CD4-positive, alpha-beta T cell (primary cell): ENCODE measurements at regions of chr16 and their contacts with region 1.

Region 1: DNA sequence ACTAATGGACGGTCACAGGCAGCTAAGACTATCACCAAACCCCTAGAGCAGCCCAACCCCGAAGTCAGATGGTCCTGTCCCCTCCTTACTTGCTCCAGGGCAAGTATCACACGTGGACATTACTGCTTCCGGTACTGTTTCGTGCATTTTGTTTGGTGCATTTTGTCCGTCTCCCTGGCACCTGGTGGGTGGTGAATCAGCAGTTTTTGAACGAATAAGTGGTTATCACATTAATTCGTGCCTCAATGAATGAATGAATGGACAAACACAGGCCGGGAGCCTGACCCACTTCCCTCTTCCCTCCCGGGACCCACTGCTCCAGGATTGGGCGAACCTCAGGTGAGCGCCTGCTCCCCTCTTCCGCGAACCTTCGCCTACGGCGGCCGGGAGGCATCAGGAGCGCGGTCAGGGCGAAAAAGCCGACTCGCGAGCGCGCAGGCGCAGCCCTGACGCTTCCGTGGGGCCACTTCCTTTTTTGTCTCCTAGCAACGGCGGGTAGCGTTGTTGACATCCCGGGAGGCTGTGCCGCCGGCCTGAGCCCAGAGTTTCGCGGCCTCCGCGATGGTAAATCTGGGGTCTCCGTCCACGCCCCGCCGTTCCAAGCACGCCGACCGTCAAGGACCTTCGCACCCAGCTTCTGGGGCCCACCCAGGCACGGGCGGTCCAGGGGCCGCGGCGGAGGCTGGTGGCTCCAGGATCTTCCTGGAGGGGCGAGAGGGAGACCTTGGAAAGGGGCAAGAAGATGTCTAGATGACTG is at the start of gene DYNLRB2:
- DNase-seq: peak; percentile 85 to 97 (median 89)
- ATAC-seq: peak; percentile 91
- H3K4me3 ChIP-seq: peak within 1 kb of the TSS; percentile 62
- H3K4me3 Mint-ChIP-seq: peak within 1 kb of the TSS; percentile 93
- H3K27ac ChIP-seq: peak within 1 kb of the TSS; percentile 36 to 62
- H3K27ac Mint-ChIP-seq: peak within 1 kb of the TSS; percentile 94
- H3K4me1 ChIP-seq: peaks cover 11% of the 10 kb centered on the region
- H3K4me1 Mint-ChIP-seq: peaks cover 17% of the 10 kb centered on the region
- H3K27me3 ChIP-seq: no peaks in the 10 kb centered on the region
- H3K27me3 Mint-ChIP-seq: peaks cover 4% of the 10 kb centered on the region
- CTCF ChIP-seq: no peak
- total RNA-seq, gene DYNLRB2: 0.31 TPM in 1 of 2 experiments, not detected in the other

Region 2: GRCh38 chr16:79770244-79771064 is 770.2 kb before region 1 on chr16:
- CTCF ChIA-PET with region 1: no interaction called
- POLR2A ChIA-PET with region 1: no interaction called
- intact Hi-C with region 1: loop called in 1 of 2 experiments (anchors 5 kb)
- DNase-seq: peak; percentile 12 to 90 (median 53)
- ATAC-seq: peak; percentile 91
- H3K4me3 ChIP-seq: peak overlapping the region; percentile 79
- H3K4me3 Mint-ChIP-seq: peak overlapping the region; percentile 91
- H3K27ac ChIP-seq: no peak overlapping the region
- H3K27ac Mint-ChIP-seq: no peak overlapping the region
- H3K4me1 ChIP-seq: peaks cover 12% of the 10 kb centered on the region
- H3K4me1 Mint-ChIP-seq: peaks cover 16% of the 10 kb centered on the region
- H3K27me3 ChIP-seq: no peaks in the 10 kb centered on the region
- H3K27me3 Mint-ChIP-seq: no peaks in the 10 kb centered on the region
- CTCF ChIP-seq: no peak

Region 3: GRCh38 chr16:80804056-80804450 is 263.4 kb after region 1 on chr16:
- CTCF ChIA-PET with region 1: no interaction called
- POLR2A ChIA-PET with region 1: no interaction called
- intact Hi-C with region 1: loop called in 1 of 2 experiments (anchors 5 kb)
- DNase-seq: peak; percentile 36 to 80 (median 59)
- ATAC-seq: peak; percentile 58
- H3K4me3 ChIP-seq: peak overlapping the region; percentile 57
- H3K4me3 Mint-ChIP-seq: peak overlapping the region; percentile 96
- H3K27ac ChIP-seq: no peak overlapping the region
- H3K27ac Mint-ChIP-seq: peak overlapping the region; percentile 71
- H3K4me1 ChIP-seq: peaks cover 20% of the 10 kb centered on the region
- H3K4me1 Mint-ChIP-seq: peaks cover 16% of the 10 kb centered on the region
- H3K27me3 ChIP-seq: no peaks in the 10 kb centered on the region
- H3K27me3 Mint-ChIP-seq: no peaks in the 10 kb centered on the region
- CTCF ChIP-seq: no peak

Region 4: DNA sequence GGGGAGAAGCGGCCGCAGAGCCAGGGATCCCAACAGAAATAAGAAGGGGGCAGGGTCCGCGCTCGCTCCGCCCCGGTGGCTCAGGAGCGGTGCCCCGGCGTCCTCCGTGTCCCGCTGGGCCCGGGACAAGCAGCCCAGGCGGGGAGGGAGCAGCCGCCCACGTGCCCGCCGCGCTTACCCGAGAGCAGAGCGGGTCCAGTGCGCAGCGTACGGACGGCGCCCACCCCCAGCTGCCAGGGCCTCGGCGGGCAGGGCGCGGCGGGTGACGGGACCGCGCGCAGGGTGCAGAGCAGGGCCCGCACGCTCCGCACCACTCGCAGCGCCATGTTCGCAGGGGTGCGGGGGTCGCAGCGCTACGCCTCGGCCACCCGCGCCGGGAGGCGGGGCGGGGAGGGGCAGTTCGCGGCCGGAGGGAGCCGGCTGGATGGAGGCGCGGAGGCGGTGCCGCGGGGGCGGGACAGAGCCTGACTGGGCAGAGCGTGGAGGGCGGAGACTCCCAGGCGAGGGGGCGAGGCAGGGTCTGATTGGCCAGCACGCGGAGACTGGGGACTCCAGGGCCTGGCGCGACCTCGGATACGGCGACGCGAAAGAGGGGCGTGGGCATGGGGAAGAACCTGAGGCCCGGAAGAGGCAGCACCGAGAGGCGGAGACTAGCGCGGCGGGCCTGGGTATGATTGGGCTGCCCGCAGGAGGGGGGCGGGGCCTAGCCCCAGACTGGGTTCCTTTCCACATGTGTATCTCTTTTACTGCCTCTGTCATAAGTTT is 555.4 kb after region 1 on chr16 and contains the start of gene GCSH:
- CTCF ChIA-PET with region 1: no interaction called
- POLR2A ChIA-PET with region 1: no interaction called
- intact Hi-C with region 1: loop called in 1 of 2 experiments (anchors 5 kb)
- DNase-seq: peak; percentile 95 to 100 (median 98)
- ATAC-seq: peak; percentile 96
- H3K4me3 ChIP-seq: peak within 1 kb of the TSS; percentile 74
- H3K4me3 Mint-ChIP-seq: peak within 1 kb of the TSS; percentile 96
- H3K27ac ChIP-seq: peak within 1 kb of the TSS in 1 of 2 donors; percentile 16
- H3K27ac Mint-ChIP-seq: peak within 1 kb of the TSS; percentile 77
- H3K4me1 ChIP-seq: peaks cover 17% of the 10 kb centered on the region
- H3K4me1 Mint-ChIP-seq: peaks cover 17% of the 10 kb centered on the region
- H3K27me3 ChIP-seq: no peaks in the 10 kb centered on the region
- H3K27me3 Mint-ChIP-seq: no peaks in the 10 kb centered on the region
- CTCF ChIP-seq: no peak
- total RNA-seq, gene GCSH: 2.3 to 3.2 TPM